Left cardiac atrium (tissue), 4 donors: ENCODE measurements at regions of chr4 and their contacts with region 1.

Region 1: GRCh38 chr4:89024051-89024675 is 32.8 kb downstream of the FAM13A start:
- DNase-seq: peak; percentile 33
- ATAC-seq: peak; percentile 94 to 97

Region 2: DNA sequence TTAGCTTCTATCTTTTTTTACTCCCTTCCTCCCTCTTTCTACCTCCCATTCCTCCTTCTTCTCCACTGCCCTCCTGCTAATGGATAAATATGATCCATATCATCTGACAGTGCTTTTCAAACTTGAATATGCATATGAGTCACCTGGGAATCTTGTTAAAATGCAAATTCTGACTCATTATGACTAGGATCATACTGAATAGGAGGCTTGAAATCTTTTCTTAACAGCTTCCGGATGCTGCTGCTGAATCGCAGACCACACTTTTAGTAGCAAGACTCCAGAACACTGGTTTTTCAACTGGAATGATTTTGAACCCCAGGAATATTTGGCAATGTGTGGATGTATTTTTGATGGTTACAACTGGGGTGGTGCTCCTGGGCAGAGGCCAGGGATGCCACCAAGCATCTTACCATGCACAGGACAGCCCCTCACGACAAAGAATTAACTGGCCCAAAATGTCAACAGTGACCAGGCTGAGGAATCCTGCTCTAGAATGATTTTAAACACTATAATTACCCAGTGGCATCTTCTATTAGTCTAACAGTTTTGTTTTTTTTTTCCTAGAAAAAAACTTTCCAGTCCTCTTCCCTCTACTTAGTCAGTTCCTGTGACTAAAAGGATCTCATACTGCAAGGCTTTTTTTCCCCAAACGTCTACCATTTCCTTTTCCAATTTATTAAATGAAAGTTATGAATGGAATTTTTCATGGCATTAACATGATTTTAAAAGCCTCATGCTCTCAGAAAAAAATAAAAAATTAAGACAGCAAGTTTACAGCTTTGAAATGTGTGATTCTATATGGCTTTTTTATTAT is 490.0 kb before region 1 on chr4:
- intact Hi-C with region 1: loop called in 1 of 2 experiments (anchors 10 kb)
- DNase-seq: no peak
- ATAC-seq: peak in 1 of 2 donors; percentile 15

Region 3: GRCh38 chr4:88706574-88706973 is 317.6 kb before region 1 on chr4:
- intact Hi-C with region 1: loop called (anchors 2 to 10 kb)
- DNase-seq: peak; percentile 32
- ATAC-seq: peak; percentile 85 to 95

Region 4: GRCh38 chr4:88743696-88744095 is 280.5 kb before region 1 on chr4:
- intact Hi-C with region 1: no loop called
- DNase-seq: no peak
- ATAC-seq: peak in 1 of 2 donors; percentile 35

Region 5: DNA sequence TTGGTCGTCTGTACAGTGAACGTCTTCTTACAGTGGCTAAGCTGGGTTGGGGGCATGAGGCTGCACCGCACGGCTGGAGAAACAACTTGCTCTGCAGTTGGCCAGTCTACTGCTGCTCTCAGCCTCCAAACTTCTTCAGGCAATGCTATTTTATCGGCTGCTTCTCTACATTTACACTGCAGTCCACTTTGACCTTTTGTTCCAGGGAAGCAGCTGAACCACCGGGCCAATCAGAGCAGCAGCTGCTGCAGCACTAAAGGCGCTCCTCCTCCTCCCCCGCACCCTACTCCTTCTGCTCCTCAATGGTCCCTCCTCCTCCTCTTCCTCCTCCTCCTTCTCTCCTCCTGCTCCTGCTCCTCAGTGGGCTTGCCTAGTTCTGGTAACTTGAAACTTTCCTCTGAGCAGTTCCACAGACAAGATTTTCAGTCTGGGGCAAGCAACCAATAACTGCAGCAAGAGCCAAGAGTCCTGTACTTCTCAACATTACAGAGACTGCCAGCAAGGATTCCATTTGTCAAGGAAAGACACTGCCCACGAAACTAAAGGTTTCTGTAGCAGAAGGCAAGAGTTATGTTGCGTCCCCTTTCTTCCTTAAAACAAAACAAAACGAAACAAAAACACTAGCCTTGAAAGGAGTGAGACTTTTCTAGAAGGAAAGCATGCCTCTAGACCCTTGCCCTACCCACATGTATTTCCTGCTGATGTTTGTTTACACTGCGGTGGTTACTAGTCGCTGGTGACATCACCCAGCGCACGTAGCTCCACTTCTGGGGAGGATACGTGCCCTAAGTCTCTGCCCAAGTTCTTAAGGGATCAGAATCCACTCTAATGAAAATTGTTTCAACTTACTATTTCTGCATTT is 200.9 kb before region 1 on chr4:
- intact Hi-C with region 1: loop called (anchors 1 to 2 kb)
- DNase-seq: peak; percentile 88
- ATAC-seq: peak; percentile 95 to 98